Activated naive CD4-positive, alpha-beta T cell treated with anti-CD3 and anti-CD28 coated beads for 36 hours (primary cell): ENCODE measurements at regions of chr21 and their contacts with region 1.

Region 1: GRCh38 chr21:22223385-22223784 is 1225.2 kb downstream of the NCAM2 start:
- DNase-seq: peak; percentile 6
- H3K4me3 Mint-ChIP-seq: no peak overlapping the region
- H3K27ac Mint-ChIP-seq: no peak overlapping the region
- H3K4me1 Mint-ChIP-seq: peaks cover 8% of the 10 kb centered on the region
- H3K27me3 Mint-ChIP-seq: peaks cover 3% of the 10 kb centered on the region

Region 2: DNA sequence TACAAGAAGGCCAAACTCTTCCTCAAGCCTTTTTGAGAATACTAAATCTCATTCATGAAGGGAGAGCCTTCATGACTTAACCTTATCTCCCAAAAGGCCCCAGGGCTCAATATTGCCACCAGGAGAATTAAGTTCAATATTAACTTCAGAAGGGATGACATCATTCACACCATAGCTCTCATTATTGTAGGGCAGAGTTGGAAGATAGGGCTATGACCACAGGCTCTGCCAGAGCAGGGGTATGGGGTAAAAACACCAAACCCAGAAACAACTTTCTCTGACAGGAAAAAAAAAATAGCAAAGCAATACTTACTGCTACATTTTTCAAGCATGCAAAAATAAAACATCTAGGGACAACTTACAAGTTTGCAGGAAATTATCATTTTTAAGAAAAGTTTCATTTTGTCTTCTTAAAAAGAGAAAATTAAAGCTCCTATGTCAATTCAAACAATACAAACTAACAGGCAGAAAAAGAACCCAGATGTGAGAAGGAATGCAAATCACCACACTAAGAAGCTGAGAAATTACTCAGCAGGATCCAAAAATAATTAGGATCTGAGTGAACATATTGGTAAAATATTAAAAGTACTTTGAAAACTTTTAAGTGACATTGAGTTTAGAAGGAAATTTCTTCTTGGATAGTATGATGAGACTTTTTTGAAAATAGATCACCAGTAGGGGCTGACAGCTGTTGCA is 68.7 kb before region 1 on chr21:
- CTCF ChIA-PET with region 1: no interaction called
- intact Hi-C with region 1: no loop called
- DNase-seq: no peak
- H3K4me3 Mint-ChIP-seq: no peak overlapping the region
- H3K27ac Mint-ChIP-seq: no peak overlapping the region
- H3K4me1 Mint-ChIP-seq: no peaks in the 10 kb centered on the region
- H3K27me3 Mint-ChIP-seq: no peaks in the 10 kb centered on the region

Region 3: DNA sequence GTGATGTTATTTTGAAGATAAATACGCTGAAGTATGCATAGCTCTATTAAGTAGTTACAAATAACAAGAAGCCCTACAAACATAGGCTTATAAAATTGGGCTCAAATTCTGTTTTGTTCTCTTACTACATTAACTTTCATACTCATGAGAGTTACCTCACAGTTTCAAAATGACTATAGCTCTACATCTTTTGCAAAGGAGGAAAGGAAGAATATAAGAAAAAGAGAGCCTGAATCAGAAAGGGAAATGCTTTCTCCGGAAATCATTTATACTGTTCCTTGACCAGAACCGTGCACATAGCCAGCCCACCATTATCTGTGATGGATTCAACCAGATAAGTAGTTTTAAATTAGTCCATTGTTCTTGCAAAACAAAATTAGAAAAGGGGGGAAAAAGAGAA is 27.0 kb after region 1 on chr21:
- CTCF ChIA-PET with region 1: no interaction called
- intact Hi-C with region 1: loop called (anchors 1 kb)
- DNase-seq: no peak
- H3K4me3 Mint-ChIP-seq: no peak overlapping the region
- H3K27ac Mint-ChIP-seq: no peak overlapping the region
- H3K4me1 Mint-ChIP-seq: peaks cover 4% of the 10 kb centered on the region
- H3K27me3 Mint-ChIP-seq: no peaks in the 10 kb centered on the region

Region 4: GRCh38 chr21:22260274-22260673 is 36.9 kb after region 1 on chr21:
- CTCF ChIA-PET with region 1: interaction called, 3 read pairs
- intact Hi-C with region 1: loop called (anchors 1 kb)
- DNase-seq: no peak
- H3K4me3 Mint-ChIP-seq: no peak overlapping the region
- H3K27ac Mint-ChIP-seq: no peak overlapping the region
- H3K4me1 Mint-ChIP-seq: no peaks in the 10 kb centered on the region
- H3K27me3 Mint-ChIP-seq: no peaks in the 10 kb centered on the region

Region 5: GRCh38 chr21:22421416-22422180 is 198.2 kb after region 1 on chr21:
- CTCF ChIA-PET with region 1: no interaction called
- intact Hi-C with region 1: loop called (anchors 10 kb)
- DNase-seq: peak; percentile 22
- H3K4me3 Mint-ChIP-seq: peak overlapping the region; percentile 26
- H3K27ac Mint-ChIP-seq: no peak overlapping the region
- H3K4me1 Mint-ChIP-seq: peaks cover 15% of the 10 kb centered on the region
- H3K27me3 Mint-ChIP-seq: no peaks in the 10 kb centered on the region

Region 6: DNA sequence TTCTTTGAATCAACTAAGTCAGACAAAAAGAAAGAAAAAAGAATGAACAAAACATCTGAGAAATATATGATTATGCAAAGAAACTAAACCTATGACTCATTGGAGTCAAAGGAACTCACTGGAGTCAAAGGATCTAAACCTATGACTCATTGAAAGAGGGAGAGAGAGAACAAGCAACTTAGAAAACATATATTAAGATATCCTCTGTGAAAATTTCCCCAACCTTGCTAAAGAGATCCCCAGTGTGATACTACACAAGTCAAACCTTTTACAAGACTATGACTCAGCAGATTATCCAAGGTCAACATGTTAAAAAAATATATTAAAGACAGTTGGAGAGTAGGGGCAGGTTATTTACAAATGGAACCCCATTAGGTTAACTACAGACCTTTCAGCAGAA is 313.1 kb after region 1 on chr21:
- CTCF ChIA-PET with region 1: no interaction called
- intact Hi-C with region 1: loop called (anchors 1 kb)
- DNase-seq: no peak
- H3K4me3 Mint-ChIP-seq: no peak overlapping the region
- H3K27ac Mint-ChIP-seq: no peak overlapping the region
- H3K4me1 Mint-ChIP-seq: peaks cover 11% of the 10 kb centered on the region
- H3K27me3 Mint-ChIP-seq: no peaks in the 10 kb centered on the region